ENCODE measurements at regions of chr3 and their contacts with region 1.

Region 1: GRCh38 chr3:134794950-134795745 is at the start of gene EPHB1:
- DNase-seq: peak; percentile 77
- H3K4me3 ChIP-seq: peak within 1 kb of the TSS; percentile 21 to 38
- H3K27ac ChIP-seq: peak within 1 kb of the TSS in 1 of 2 donors; percentile 32
- H3K4me1 ChIP-seq: peaks cover 4% of the 10 kb centered on the region
- H3K27me3 ChIP-seq: peaks cover 11% of the 10 kb centered on the region
- CTCF ChIP-seq: peak; percentile 67 to 91 (median 86)
- POLR2A ChIP-seq: peak; percentile 41
- total RNA-seq, gene EPHB1: 2.3 to 21.2 TPM

Region 2: GRCh38 chr3:134885877-134886621 is 90.9 kb after region 1 on chr3:
- intact Hi-C with region 1: no loop called
- DNase-seq: no peak
- H3K4me3 ChIP-seq: no peak overlapping the region
- H3K27ac ChIP-seq: no peak overlapping the region
- H3K4me1 ChIP-seq: no peaks in the 10 kb centered on the region
- H3K27me3 ChIP-seq: no peaks in the 10 kb centered on the region
- CTCF ChIP-seq: no peak
- POLR2A ChIP-seq: no peak

Region 3: DNA sequence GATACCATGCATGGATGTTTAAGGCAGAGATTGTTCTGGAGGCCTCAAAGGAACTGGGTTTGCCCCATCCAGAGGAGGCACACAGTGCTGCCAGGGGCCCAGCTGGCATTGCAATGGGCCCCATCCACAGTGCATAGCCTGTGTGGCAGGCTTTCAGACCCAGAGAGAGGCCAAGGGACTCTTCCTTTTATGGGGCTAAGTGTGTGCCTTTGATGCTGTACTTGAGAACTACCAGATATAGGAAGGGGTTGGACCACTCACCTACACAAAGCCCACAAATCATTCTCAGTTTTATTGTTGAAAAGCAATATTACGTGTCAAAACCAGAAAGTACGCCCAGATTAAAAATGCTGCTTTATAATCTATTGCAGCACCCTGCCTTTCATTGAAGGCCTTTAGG is 134.8 kb after region 1 on chr3:
- intact Hi-C with region 1: loop called (anchors 5 kb)
- DNase-seq: no peak
- H3K4me3 ChIP-seq: no peak overlapping the region
- H3K27ac ChIP-seq: no peak overlapping the region
- H3K4me1 ChIP-seq: no peaks in the 10 kb centered on the region
- H3K27me3 ChIP-seq: no peaks in the 10 kb centered on the region
- CTCF ChIP-seq: no peak
- POLR2A ChIP-seq: no peak

Region 4: GRCh38 chr3:135240426-135240825 is 445.3 kb after region 1 on chr3:
- intact Hi-C with region 1: loop called (anchors 10 kb)
- DNase-seq: no peak
- H3K4me3 ChIP-seq: no peak overlapping the region
- H3K27ac ChIP-seq: no peak overlapping the region
- H3K4me1 ChIP-seq: no peaks in the 10 kb centered on the region
- H3K27me3 ChIP-seq: no peaks in the 10 kb centered on the region
- CTCF ChIP-seq: no peak
- POLR2A ChIP-seq: no peak

Region 5: GRCh38 chr3:135895106-135895733 is 1100.1 kb after region 1 on chr3:
- intact Hi-C with region 1: loop called (anchors 2 kb)
- DNase-seq: peak; percentile 70
- H3K4me3 ChIP-seq: no peak overlapping the region
- H3K27ac ChIP-seq: no peak overlapping the region
- H3K4me1 ChIP-seq: no peaks in the 10 kb centered on the region
- H3K27me3 ChIP-seq: no peaks in the 10 kb centered on the region
- CTCF ChIP-seq: peak; percentile 46 to 81 (median 76)
- POLR2A ChIP-seq: no peak

Measured in prostate gland (tissue), 2 donors.